ENCODE measurements at regions of chr19 and their contacts with region 1.

Region 1: DNA sequence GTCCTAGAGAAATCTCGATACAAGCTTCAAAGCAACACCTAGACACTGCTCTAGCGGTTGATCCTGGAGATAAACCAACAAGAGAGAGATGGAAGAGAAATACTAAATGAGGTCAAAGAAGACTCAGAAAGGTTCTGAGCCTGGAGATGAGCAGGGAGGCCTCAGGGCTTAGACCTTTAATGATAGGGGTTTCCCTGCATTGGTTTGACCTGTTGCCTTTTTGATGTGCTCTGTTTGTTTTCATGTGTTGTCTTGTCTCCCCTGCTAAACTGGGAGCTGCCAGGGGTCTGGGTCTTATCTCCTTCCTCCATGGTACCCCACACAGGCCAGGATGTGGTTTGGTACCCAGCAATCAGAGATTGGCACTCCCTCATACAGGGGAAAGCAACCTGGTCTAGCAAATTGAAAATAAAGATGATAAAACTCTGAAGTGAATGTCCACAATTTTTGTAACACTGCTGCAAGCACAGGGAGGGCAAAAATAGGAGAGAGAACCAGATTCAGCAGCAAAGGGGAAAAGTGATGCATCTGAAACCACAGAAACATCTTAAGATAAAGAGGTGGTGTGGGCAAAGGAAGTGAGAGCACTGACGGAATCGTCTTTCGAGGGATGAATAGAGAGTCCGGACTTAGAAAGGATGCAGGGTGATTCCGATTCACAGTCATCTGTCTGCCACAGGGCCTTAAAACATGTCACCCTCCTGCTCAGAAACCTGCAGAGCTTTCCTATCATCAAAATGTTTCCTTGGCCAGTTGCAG is 3.5 kb downstream of the FFAR2 start:
- DNase-seq: no peak
- H3K4me3 Mint-ChIP-seq: no peak overlapping the region
- H3K27ac Mint-ChIP-seq: no peak overlapping the region
- H3K4me1 Mint-ChIP-seq: peaks cover 15% of the 10 kb centered on the region
- H3K27me3 Mint-ChIP-seq: peaks cover 30% of the 10 kb centered on the region

Region 2: GRCh38 chr19:35436477-35437405 is 14.8 kb before region 1 on chr19:
- intact Hi-C with region 1: loop called (anchors 1 kb)
- DNase-seq: no peak
- H3K4me3 Mint-ChIP-seq: peak overlapping the region; percentile 32
- H3K27ac Mint-ChIP-seq: peak overlapping the region; percentile 28
- H3K4me1 Mint-ChIP-seq: peaks cover 19% of the 10 kb centered on the region
- H3K27me3 Mint-ChIP-seq: peaks cover 9% of the 10 kb centered on the region

Region 3: DNA sequence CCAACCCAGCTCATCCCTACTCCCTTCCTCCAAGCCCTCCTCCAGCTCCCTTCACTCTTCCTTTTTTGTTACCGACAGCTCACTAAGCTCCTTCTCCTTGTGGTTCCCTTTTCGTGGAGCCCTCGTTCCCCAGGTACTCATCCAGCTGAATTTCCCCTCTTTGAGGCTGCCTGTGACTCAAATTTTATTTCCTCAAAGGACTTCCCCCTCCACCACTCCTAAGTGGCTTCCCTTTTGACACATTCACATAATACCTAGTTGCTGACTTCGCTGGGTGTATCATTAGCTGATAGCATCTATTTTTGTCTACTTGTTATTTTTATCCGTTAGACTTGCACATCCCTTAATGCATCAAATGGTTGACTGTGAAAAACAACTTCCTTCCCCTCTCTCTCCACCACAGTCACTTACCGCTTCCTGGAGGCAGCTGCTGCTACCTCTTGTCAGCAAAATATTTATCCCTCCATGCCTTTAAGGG is 11.0 kb after region 1 on chr19:
- intact Hi-C with region 1: loop called (anchors 1 kb)
- DNase-seq: peak; percentile 46
- H3K4me3 Mint-ChIP-seq: peak overlapping the region; percentile 61
- H3K27ac Mint-ChIP-seq: peak overlapping the region; percentile 76
- H3K4me1 Mint-ChIP-seq: peaks cover 47% of the 10 kb centered on the region
- H3K27me3 Mint-ChIP-seq: peaks cover 9% of the 10 kb centered on the region

Region 4: DNA sequence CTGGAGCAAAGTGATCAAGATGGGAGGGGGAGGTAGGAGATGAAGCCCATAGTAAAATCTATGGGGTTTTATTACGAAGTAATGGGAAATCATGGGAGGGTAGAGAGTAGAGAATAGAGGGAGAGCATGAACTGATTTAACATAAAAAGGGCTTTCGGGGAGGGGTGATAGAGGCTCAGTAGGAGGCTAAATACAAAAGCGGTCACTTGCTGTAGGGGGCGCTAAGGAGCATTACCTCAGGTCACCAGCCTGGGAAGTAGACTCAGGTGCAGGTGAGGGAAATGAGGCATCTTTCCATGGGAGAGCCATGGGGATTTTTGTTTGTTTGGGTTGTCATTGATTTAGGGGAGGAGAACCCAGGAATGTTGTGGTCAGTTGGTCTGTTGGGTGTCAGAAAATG is 24.6 kb after region 1 on chr19:
- intact Hi-C with region 1: no loop called
- DNase-seq: no peak
- H3K4me3 Mint-ChIP-seq: no peak overlapping the region
- H3K27ac Mint-ChIP-seq: no peak overlapping the region
- H3K4me1 Mint-ChIP-seq: no peaks in the 10 kb centered on the region
- H3K27me3 Mint-ChIP-seq: peaks cover 3% of the 10 kb centered on the region

Region 5: DNA sequence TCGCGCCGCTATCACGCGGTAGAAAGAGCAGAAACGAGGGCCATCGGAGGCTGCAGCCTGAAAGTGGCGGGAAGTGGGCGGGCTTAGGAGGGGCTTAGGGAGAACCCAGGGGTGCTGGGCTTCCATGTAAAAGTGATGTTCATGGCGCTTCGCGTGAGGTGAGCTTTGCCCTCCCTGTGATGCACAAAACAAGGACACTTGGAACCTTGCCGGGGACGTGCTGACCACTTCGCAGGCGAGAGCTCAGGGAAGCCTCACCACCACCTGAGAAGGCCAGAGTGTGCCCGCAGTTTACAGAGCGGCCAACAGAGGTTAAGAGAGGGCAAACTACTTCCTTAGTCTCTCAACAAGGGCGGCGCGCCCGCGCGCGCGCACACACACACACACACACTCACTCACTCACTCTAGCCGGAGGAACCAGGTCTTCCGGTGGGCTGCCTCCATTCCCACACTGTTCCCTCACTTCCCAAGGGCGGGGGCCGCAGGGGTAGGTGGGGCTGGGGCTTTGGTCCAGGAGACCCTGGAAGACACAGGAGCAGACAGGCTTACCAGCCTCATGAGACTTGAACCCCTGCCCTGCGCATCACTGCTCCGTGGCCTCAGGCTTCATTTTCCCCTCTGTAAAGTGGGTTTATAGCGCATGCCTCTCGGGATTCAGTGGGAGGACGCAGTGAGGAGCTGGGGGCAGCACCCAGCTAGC is 82.5 kb after region 1 on chr19:
- intact Hi-C with region 1: no loop called
- DNase-seq: peak; percentile 21
- H3K4me3 Mint-ChIP-seq: peak overlapping the region; percentile 56
- H3K27ac Mint-ChIP-seq: peak overlapping the region; percentile 26
- H3K4me1 Mint-ChIP-seq: peaks cover 7% of the 10 kb centered on the region
- H3K27me3 Mint-ChIP-seq: peaks cover 26% of the 10 kb centered on the region